RWPE1 (cell line): ENCODE measurements at regions of chr5 and their contacts with region 1.

Region 1: DNA sequence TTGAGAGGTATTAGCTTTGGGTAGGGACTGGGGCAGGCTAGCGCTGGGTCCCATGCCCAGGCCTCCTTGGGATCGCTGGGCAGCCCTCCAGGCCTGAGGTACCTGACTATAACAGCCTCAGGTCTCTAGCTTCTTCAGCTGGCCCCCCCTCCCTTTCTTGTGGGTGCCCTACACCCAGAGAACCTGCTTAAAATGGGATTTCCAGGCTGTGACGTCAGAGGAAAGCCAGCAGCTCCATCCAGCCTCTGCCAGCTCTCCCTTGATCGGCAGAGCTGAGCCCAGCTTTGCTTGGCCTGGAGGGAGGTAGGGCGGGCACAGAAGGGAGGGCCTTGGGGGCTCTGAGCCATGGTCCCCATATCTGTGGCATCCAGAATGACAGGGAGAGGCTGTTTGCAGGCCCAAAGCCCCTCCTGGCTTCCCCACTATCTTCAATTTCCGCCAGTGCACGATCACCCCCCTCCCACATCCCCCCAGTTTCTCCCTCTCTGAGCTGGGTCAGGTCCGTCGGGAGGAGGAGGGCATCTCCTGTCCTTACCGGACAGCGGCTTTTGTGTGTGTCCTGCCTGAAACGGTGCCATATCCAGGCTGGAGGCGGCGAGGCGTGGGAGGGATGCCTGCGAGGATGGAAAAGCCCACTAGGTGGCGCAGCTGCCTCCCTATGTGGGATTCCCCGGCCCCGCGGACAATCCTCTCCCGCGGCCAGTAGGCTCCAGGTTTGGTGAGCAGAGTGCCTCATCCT is 10.8 kb downstream of the REEP2 start:
- DNase-seq: peak; percentile 98
- H3K27ac ChIP-seq: peak overlapping the region; percentile 40
- CTCF ChIP-seq: peak; percentile 98

Region 2: DNA sequence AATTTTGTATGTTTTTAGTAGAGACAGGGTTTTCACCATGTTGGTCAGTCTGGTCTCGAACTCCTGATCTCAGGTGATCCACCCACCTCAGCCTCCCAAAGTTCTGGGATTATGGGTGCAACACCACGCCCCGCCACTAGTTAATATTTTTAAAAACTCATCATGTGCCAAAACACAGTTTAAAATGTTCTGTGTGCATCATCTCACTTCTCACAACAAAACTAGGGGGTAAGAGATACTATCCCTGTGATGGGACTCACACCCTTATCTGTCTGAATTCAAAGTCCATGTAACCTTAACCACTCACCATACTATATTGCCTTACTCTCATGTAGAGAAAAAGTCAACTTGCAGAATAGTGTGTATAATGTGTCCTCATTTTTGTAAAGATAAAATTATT is 557.8 kb before region 1 on chr5:
- CTCF ChIA-PET with region 1: interaction called, 10 read pairs
- POLR2A ChIA-PET with region 1: no interaction called
- DNase-seq: no peak
- H3K27ac ChIP-seq: no peak overlapping the region
- CTCF ChIP-seq: 0 out of 2 replicates have a peak, but pooled peaks have one; percentile 24

Region 3: DNA sequence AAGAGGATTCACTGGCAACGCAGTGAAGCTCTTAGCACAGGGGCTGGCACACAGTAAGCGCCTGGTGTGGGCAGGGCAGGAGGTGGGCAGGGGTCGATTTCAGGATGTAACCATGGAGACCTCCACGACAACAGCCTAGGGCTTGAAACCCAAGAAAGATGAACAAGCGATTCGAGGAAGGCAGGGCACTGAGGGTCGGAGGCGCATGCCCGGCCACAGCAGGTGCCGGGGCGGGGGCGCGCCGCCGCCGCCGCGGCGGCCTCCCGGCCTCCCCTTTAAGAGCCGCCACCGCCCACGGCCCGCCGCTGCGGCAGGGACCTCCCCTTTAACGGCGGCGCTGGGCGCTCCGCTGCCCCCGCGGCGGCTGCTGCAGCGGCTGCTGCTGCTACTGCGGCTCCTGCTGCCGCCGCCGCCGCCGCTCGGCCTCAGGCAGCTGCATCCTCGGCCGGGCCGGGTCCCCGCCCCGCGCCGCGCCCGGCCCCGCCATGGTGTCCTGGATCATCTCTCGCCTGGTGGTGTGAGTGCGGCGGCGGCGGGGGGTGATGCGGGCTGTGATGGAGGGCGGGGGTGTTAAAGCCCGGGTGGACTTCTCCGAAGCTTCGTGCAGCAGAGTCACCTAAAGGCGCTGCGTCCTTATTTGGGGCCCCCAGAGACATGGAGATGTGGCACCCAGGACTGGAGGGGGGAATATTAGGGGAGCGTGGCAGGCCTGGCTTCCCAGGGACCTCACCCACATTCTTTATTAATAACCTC is 10.8 kb before region 1 on chr5 and contains the start of gene REEP2:
- CTCF ChIA-PET with region 1: interaction called, 11 read pairs
- POLR2A ChIA-PET with region 1: no interaction called
- DNase-seq: peak; percentile 56
- H3K27ac ChIP-seq: peak within 1 kb of the TSS; percentile 38
- CTCF ChIP-seq: no peak

Region 4: GRCh38 chr5:138464008-138464387 is 14.3 kb after region 1 on chr5:
- CTCF ChIA-PET with region 1: interaction called, 25 read pairs
- POLR2A ChIA-PET with region 1: interaction called, 8 read pairs
- DNase-seq: peak; percentile 98
- H3K27ac ChIP-seq: peak overlapping the region; percentile 97
- CTCF ChIP-seq: peak; percentile 99

Region 5: DNA sequence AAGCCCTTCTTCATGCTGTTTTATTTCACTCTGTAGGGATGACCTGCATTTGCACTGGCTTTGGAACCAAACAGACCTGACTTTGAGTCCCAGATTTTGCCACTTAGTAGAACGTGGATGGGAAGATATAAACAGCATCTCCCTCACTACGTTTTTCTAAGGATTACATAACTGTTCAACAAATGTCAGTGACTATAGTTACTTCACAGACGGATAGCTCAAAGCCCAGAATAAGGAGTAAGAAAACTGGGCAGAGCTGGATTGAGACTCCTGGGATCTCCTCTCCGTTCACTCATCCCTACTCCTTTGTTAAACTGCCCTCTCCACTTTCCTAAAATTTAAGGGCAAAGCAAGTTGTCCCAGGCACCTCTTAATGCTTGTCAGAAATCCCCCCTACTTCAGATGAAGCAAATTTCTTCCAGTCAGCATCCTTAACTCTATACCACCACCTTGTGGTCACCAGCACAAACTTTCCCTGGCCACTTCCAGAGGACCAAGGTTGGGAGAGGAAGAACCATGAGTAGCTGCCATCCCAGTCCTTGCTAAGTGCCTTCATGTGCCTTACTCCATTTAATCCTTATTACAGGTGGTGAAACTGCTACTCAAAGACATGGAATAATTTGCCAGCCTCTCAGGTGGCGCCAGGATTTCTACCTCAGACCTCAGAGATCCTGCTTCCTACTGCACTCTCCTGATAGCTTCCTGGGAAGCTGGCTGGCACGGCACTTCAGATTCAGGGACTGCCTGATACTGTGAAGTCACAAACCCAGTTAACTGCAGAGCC is 54.0 kb after region 1 on chr5:
- CTCF ChIA-PET with region 1: interaction called, 41 read pairs
- POLR2A ChIA-PET with region 1: interaction called, 7 read pairs
- DNase-seq: peak; percentile 86
- H3K27ac ChIP-seq: peak overlapping the region; percentile 91
- CTCF ChIP-seq: peak; percentile 90

Region 6: DNA sequence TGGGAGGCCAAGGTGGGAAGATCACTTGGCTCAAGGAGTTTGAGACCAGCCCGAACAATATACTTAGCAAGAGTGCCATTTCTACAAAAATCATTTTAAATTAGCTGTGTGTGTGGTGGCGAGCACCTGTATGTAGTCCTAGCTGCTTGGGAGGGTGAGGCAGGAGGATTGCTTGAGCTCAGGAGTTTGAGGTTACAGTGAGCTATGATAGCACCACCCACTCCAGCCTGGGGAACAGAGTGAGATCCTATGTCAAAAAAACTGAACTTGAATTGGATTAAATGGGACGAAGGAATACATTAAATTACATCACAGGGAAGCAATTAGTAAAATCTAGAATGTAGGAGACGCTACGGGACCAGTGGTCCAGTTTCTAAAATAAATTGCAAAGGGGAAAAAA is 99.7 kb after region 1 on chr5:
- CTCF ChIA-PET with region 1: interaction called, 13 read pairs
- POLR2A ChIA-PET with region 1: no interaction called
- DNase-seq: no peak
- H3K27ac ChIP-seq: no peak overlapping the region
- CTCF ChIP-seq: no peak